Endothelial cell of umbilical vein (primary cell): ENCODE measurements at regions of chr5 and their contacts with region 1.

Region 1: GRCh38 chr5:10452768-10453331 is 11.2 kb downstream of the ROPN1L start:
- DNase-seq: peak; percentile 87
- H3K4me3 ChIP-seq: no peak overlapping the region
- H3K27ac ChIP-seq: no peak overlapping the region
- H3K4me1 ChIP-seq: peaks cover 10% of the 10 kb centered on the region
- H3K27me3 ChIP-seq: no peaks in the 10 kb centered on the region
- CTCF ChIP-seq: peak; percentile 56 to 67
- POLR2A ChIP-seq: no peak

Region 2: DNA sequence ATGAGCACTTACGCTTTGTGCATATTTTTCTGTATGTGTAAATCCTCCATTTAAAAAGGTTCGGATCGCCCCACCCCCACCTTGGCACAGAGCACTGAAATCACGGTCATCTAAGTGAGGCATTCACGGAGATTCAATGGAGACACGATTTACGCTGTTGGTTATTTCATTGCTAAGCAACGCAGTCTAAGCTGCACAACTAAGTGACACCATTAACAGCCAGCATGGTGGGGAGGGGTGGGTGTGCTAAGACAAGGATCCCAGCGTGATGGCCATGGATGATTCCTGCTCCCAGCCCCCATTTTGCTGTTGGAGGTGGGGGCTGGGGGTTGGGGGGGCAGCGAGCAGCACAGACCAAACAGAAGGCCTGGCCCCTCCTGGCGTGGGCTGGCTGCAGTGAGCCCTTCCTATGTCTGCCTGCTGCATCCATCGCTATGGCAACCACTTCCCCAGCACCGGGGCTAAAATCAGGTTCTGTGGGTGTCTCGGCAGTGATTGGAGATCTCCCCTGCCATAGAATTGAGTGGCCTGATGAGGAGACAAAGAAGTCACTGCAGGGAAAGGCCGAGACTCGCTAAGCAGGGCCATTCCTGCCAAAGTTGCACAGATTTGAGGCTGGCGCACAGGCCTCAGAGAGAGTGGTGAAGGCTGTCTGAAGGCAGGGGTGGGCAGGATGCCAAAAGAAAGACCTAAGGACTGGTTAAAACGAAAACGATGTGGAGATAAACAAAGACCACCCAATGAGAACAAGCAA is 113.6 kb before region 1 on chr5:
- CTCF ChIA-PET with region 1: no interaction called
- POLR2A ChIA-PET with region 1: no interaction called
- dilution Hi-C with region 1: no loop called
- intact Hi-C with region 1: no loop called
- DNase-seq: no peak
- H3K4me3 ChIP-seq: no peak overlapping the region
- H3K27ac ChIP-seq: no peak overlapping the region
- H3K4me1 ChIP-seq: no peaks in the 10 kb centered on the region
- H3K27me3 ChIP-seq: no peaks in the 10 kb centered on the region
- CTCF ChIP-seq: no peak
- POLR2A ChIP-seq: no peak

Region 3: GRCh38 chr5:10432059-10433008 is 20.5 kb before region 1 on chr5:
- CTCF ChIA-PET with region 1: no interaction called
- POLR2A ChIA-PET with region 1: no interaction called
- dilution Hi-C with region 1: no loop called
- intact Hi-C with region 1: no loop called
- DNase-seq: no peak
- H3K4me3 ChIP-seq: no peak overlapping the region
- H3K27ac ChIP-seq: no peak overlapping the region
- H3K4me1 ChIP-seq: no peaks in the 10 kb centered on the region
- H3K27me3 ChIP-seq: no peaks in the 10 kb centered on the region
- CTCF ChIP-seq: no peak
- POLR2A ChIP-seq: no peak

Region 4: GRCh38 chr5:10563945-10564837 is 111.3 kb after region 1 on chr5 and contains the start of gene ANKRD33B:
- CTCF ChIA-PET with region 1: interaction called, 4 read pairs
- POLR2A ChIA-PET with region 1: no interaction called
- dilution Hi-C with region 1: no loop called
- intact Hi-C with region 1: loop called (anchors 2 kb)
- DNase-seq: peak; percentile 72
- H3K4me3 ChIP-seq: peak within 1 kb of the TSS; percentile 51 to 62 (median 51)
- H3K27ac ChIP-seq: peak within 1 kb of the TSS; percentile 79
- H3K4me1 ChIP-seq: peaks cover 18% of the 10 kb centered on the region
- H3K27me3 ChIP-seq: no peaks in the 10 kb centered on the region
- CTCF ChIP-seq: no peak
- POLR2A ChIP-seq: peak; percentile 70
- total RNA-seq, gene ANKRD33B: 4.4 and 5.4 TPM in 2 replicates

Region 5: DNA sequence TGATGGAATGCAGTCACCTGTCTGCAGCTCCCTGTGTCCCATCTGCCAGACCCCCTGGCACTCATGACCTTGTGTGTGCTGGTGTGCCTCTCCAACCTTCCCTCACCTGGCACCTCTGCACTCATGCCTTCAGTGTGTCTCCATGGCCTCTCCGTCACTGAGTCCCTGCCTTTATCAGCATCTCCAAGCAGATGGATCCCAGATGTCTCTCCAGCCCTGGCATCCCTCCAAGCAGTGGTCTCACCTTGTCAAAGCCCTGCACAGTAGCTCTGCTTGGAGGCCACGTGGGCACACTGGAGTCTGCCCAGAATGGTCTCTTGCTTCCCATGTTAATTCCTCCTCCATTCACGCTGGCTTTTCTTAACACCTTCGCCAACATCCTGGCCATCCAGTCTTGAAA is 223.4 kb after region 1 on chr5:
- CTCF ChIA-PET with region 1: interaction called, 12 read pairs
- POLR2A ChIA-PET with region 1: no interaction called
- dilution Hi-C with region 1: no loop called
- intact Hi-C with region 1: loop called (anchors 1 kb)
- DNase-seq: no peak
- H3K4me3 ChIP-seq: no peak overlapping the region
- H3K27ac ChIP-seq: no peak overlapping the region
- H3K4me1 ChIP-seq: no peaks in the 10 kb centered on the region
- H3K27me3 ChIP-seq: peaks cover 3 to 4% of the 10 kb centered on the region in 2 experiments
- CTCF ChIP-seq: no peak
- POLR2A ChIP-seq: no peak

Region 6: GRCh38 chr5:10761166-10761932 is 308.5 kb after region 1 on chr5 and contains the start of gene DAP:
- CTCF ChIA-PET with region 1: no interaction called
- POLR2A ChIA-PET with region 1: no interaction called
- dilution Hi-C with region 1: no loop called
- intact Hi-C with region 1: loop called (anchors 5 kb)
- DNase-seq: peak; percentile 85
- H3K4me3 ChIP-seq: peak within 1 kb of the TSS; percentile 62 to 95 (median 84)
- H3K27ac ChIP-seq: peak within 1 kb of the TSS; percentile 81
- H3K4me1 ChIP-seq: peaks cover 24% of the 10 kb centered on the region
- H3K27me3 ChIP-seq: no peaks in the 10 kb centered on the region
- CTCF ChIP-seq: no peak
- POLR2A ChIP-seq: peak; percentile 59
- total RNA-seq, gene DAP: 173 and 188 TPM in 2 replicates

Region 7: GRCh38 chr5:11075035-11075805 is 622.4 kb after region 1 on chr5:
- CTCF ChIA-PET with region 1: no interaction called
- POLR2A ChIA-PET with region 1: no interaction called
- dilution Hi-C with region 1: no loop called
- intact Hi-C with region 1: no loop called
- DNase-seq: no peak
- H3K4me3 ChIP-seq: no peak overlapping the region
- H3K27ac ChIP-seq: no peak overlapping the region
- H3K4me1 ChIP-seq: no peaks in the 10 kb centered on the region
- H3K27me3 ChIP-seq: no peaks in the 10 kb centered on the region
- CTCF ChIP-seq: no peak
- POLR2A ChIP-seq: no peak

Region 8: DNA sequence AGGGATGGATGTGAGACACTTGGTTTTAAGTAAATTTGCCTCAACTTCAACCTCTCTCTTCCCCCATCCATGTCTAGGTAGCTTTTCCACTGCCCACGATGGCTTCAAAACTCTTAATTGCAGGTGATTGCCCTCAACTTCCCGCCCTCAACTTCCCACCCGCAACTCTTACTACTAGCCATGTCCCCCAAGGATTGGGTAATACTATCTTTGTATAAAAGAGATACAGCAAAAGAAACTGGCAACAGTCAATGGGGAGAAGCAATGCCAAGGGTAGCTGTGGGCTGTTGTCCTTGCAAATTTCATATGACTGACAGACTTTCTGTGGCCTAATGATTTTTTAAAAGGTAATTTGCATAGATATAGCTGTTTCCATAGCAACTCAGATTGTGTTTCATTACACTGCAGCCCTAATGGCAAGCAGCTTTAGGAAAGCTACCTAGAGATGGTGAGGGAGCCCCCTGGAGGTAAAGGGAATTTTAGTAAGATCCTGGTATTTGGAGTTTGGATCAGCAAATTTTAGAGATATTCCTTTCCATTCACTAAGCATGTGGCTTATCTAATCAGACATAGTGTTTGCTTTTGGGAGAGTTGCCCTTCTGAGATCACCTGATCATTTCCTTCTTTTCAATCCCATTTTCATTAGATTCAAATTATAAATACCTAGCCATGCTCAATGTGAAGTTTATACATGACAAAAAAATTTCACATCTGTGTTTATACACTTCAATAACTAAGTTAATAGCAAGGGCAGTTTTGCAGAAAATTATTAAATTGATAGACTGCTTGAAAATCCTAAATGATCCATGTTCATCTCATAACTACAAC is 729.8 kb after region 1 on chr5:
- CTCF ChIA-PET with region 1: no interaction called
- POLR2A ChIA-PET with region 1: no interaction called
- dilution Hi-C with region 1: no loop called
- intact Hi-C with region 1: loop called (anchors 5 kb)
- DNase-seq: peak; percentile 20
- H3K4me3 ChIP-seq: no peak overlapping the region
- H3K27ac ChIP-seq: no peak overlapping the region
- H3K4me1 ChIP-seq: no peaks in the 10 kb centered on the region
- H3K27me3 ChIP-seq: no peaks in the 10 kb centered on the region
- CTCF ChIP-seq: peak; percentile 13 to 25
- POLR2A ChIP-seq: no peak